Aorta (tissue), 5 donors: ENCODE measurements at regions of chr1 and their contacts with region 1.

Region 1: GRCh38 chr1:38990738-38991639 is at the start of gene AKIRIN1:
- DNase-seq: peak; percentile 99
- ATAC-seq: peak; percentile 100
- H3K4me3 ChIP-seq: peak within 1 kb of the TSS; percentile 94 to 99
- H3K27ac ChIP-seq: peak within 1 kb of the TSS; percentile 33 to 76
- H3K4me1 ChIP-seq: peaks cover 2 to 6% of the 10 kb centered on the region in 2 donors
- H3K27me3 ChIP-seq: no peaks in the 10 kb centered on the region
- total RNA-seq, gene AKIRIN1: 36.7 to 43.7 TPM

Region 2: GRCh38 chr1:38789498-38790169 is 201.4 kb before region 1 on chr1:
- intact Hi-C with region 1: no loop called
- DNase-seq: no peak
- ATAC-seq: no peak
- H3K4me3 ChIP-seq: no peak overlapping the region
- H3K27ac ChIP-seq: no peak overlapping the region
- H3K4me1 ChIP-seq: no peaks in the 10 kb centered on the region
- H3K27me3 ChIP-seq: peaks cover 0 to 3% of the 10 kb centered on the region in 2 donors

Region 3: DNA sequence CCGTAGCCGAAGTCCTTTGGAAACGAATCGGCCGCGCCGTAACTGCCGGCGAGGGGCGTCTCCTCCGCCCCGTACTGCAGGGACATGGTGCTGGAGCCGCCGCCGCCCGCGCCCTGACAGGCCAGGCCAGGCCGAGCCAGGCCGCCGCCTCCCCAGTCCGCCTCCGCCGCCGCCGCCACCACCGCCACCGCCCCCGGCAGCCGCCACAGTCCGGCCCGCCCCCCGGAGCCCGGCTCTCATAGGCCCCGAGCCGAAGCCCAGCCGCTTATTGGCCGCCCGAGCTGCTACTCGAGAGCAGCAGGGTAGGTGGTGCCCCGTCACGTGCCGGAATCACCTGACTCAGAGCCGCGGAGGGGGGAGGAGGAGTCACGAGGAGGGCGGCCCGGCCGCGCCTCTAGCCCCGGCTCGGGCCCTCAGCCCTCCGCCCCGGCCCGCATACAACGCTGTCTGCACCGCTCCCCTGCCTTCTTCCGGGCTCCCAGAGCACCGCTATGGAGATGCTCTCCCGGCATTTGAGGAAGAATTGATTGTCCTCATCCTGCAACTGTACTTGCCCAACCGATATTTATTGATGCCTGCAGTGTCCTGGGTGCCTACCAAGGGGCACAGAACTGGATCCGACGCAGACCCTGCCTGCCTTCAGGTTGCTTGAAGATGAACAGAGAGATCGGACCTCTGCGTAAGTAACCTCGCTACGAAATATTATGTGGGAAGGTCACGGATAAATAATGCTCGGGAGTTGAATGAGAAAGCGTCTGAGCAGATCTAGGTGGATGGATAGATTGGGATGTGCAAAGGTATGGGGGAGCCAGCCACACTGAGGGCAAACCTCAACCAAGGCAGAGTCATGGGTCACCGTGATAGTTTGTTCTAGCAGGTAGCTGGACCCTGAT is 131.2 kb before region 1 on chr1 and contains the start of gene RRAGC:
- intact Hi-C with region 1: loop called in 1 of 2 experiments (anchors 5 kb)
- DNase-seq: peak; percentile 100
- ATAC-seq: peak; percentile 99
- H3K4me3 ChIP-seq: peak within 1 kb of the TSS; percentile 95 to 97
- H3K27ac ChIP-seq: peak within 1 kb of the TSS in 1 of 2 donors; percentile 55
- H3K4me1 ChIP-seq: peaks cover 2 to 6% of the 10 kb centered on the region in 2 donors
- H3K27me3 ChIP-seq: no peaks in the 10 kb centered on the region
- total RNA-seq, gene RRAGC: 23.0 to 28.4 TPM

Region 4: GRCh38 chr1:38873027-38873969 is 117.7 kb before region 1 on chr1 and contains the start of gene MYCBP:
- intact Hi-C with region 1: loop called in 1 of 2 experiments (anchors 10 kb)
- DNase-seq: peak; percentile 97 to 99
- ATAC-seq: peak; percentile 98
- H3K4me3 ChIP-seq: peak within 1 kb of the TSS; percentile 62 to 64
- H3K27ac ChIP-seq: no peak within 1 kb of the TSS
- H3K4me1 ChIP-seq: peaks cover 0 to 4% of the 10 kb centered on the region in 2 donors
- H3K27me3 ChIP-seq: no peaks in the 10 kb centered on the region
- total RNA-seq, gene MYCBP: 11.9 to 13.6 TPM

Region 5: GRCh38 chr1:38941527-38942019 is 49.4 kb before region 1 on chr1 and contains the start of gene RHBDL2:
- intact Hi-C with region 1: no loop called
- DNase-seq: peak; percentile 67 to 85
- ATAC-seq: peak; percentile 67
- H3K4me3 ChIP-seq: peak within 1 kb of the TSS in 1 of 2 donors; percentile 24
- H3K27ac ChIP-seq: no peak within 1 kb of the TSS
- H3K4me1 ChIP-seq: no peaks in the 10 kb centered on the region
- H3K27me3 ChIP-seq: no peaks in the 10 kb centered on the region
- total RNA-seq, gene RHBDL2: 0.57 TPM in 1 of 2 donors, not detected in the other

Region 6: GRCh38 chr1:39076127-39076798 is 85.3 kb after region 1 on chr1:
- intact Hi-C with region 1: no loop called
- DNase-seq: peak; percentile 73 to 86
- ATAC-seq: peak; percentile 84
- H3K4me3 ChIP-seq: no peak overlapping the region
- H3K27ac ChIP-seq: no peak overlapping the region
- H3K4me1 ChIP-seq: no peaks in the 10 kb centered on the region
- H3K27me3 ChIP-seq: no peaks in the 10 kb centered on the region

Region 7: DNA sequence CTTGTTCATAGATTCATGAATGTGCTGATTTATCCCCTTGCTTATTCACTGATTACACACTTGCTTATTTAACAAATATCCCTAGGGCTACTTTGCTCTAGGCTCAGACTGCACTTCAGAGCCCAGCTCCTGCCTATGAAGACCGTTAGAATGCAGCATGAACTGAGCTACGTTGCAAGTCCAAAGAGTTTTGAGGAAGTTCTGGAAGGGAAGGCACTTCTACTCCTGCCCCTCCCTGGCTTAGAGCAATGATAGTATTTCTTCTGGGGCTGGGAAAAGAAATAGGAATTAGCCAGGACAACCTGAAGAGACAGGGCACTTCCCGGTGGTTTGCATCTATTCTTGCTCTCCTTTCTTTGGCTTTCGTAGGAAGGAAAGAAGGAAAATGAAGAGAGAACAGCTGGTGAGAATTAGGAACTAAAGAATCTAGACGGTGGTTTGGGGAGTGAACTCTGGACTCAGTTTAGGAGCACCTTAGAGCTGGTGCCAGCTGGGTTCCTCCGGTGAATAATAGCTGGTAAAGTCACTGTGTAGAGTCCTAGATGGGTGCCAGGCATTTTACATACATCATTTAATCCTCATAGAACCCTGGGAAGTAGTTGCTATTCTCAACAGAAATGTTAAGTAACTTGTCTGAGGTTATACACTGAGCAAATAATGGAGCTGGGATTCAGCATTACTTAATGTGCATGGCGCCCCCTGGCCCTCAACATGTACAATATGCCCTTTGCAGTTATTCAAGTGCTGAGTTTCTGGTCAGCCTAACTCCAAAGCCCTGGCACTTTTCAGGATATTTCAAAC is 101.1 kb after region 1 on chr1:
- intact Hi-C with region 1: loop called in 1 of 2 experiments (anchors 1 kb)
- DNase-seq: peak; percentile 78 to 88
- ATAC-seq: peak; percentile 80
- H3K4me3 ChIP-seq: no peak overlapping the region
- H3K27ac ChIP-seq: no peak overlapping the region
- H3K4me1 ChIP-seq: no peaks in the 10 kb centered on the region
- H3K27me3 ChIP-seq: no peaks in the 10 kb centered on the region